ENCODE measurements at regions of chr1 and their contacts with region 1.

Region 1: DNA sequence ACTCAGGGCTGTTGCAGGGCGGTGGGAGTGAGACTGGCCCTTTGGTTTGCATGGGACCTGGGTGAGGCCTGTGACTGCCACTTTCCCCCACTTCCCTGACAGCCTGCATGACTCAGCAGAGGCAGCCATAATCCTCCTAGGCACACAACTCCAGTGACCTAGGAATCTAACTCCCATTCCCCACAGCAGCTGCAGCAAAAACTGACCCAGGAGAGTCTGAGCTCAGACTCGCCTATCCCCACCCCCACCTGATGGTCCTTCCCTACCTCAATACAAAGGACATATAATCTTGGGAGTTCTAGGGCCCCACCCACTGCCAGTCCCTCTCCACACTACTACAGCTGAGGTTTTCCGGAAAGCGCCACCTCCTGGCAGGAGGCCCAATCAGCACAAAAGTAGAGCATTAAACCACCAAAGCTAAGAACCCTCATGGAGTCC is 26.7 kb downstream of the NDC1 start:
- DNase-seq: peak; percentile 33
- H3K4me3 Mint-ChIP-seq: no peak overlapping the region
- H3K27ac Mint-ChIP-seq: no peak overlapping the region
- H3K4me1 Mint-ChIP-seq: peaks cover 2% of the 10 kb centered on the region
- H3K27me3 Mint-ChIP-seq: no peaks in the 10 kb centered on the region

Region 2: DNA sequence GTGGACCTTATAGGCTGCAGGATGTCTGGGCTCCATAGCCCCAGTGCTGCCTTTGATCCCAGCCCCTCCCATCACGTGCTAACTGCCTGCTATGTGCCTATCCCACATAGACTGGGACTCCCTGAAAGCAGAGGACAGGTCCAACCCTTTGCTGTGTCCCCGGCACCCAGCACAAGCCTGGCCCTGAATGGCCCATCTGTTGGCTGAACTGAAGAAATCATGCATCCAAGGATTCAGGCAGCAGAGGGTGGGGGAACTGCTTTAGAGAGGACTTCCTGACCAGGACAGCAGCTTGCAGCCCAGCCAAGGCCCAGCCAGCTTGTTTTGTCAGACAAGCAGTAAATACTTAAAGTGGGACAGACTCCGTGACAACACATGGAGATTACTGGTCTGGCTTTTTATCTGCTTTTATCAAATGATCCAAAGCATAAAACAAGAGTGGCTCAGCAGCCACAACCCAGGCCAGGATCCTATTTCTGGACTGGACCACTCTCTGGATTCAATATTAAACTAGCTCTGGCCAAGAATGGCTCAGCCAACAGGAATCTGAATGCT is 141.7 kb before region 1 on chr1:
- CTCF ChIA-PET with region 1: no interaction called
- intact Hi-C with region 1: no loop called
- DNase-seq: no peak
- H3K4me3 Mint-ChIP-seq: no peak overlapping the region
- H3K27ac Mint-ChIP-seq: no peak overlapping the region
- H3K4me1 Mint-ChIP-seq: no peaks in the 10 kb centered on the region
- H3K27me3 Mint-ChIP-seq: no peaks in the 10 kb centered on the region

Region 3: GRCh38 chr1:53800621-53801020 is 10.8 kb before region 1 on chr1:
- CTCF ChIA-PET with region 1: interaction called, 13 read pairs
- intact Hi-C with region 1: no loop called
- DNase-seq: no peak
- H3K4me3 Mint-ChIP-seq: no peak overlapping the region
- H3K27ac Mint-ChIP-seq: no peak overlapping the region
- H3K4me1 Mint-ChIP-seq: no peaks in the 10 kb centered on the region
- H3K27me3 Mint-ChIP-seq: no peaks in the 10 kb centered on the region